ENCODE measurements at regions of chr1 and their contacts with region 1.

Region 1: GRCh38 chr1:203038891-203039608 is 12.8 kb downstream of the PPFIA4 start:
- DNase-seq: peak; percentile 89
- H3K27ac ChIP-seq: peak overlapping the region; percentile 69
- CTCF ChIP-seq: peak; percentile 91

Region 2: GRCh38 chr1:202643397-202644218 is 395.4 kb before region 1 on chr1:
- CTCF ChIA-PET with region 1: no interaction called
- POLR2A ChIA-PET with region 1: no interaction called
- DNase-seq: no peak
- H3K27ac ChIP-seq: no peak overlapping the region
- CTCF ChIP-seq: no peak

Region 3: GRCh38 chr1:202852163-202852904 is 186.7 kb before region 1 on chr1:
- CTCF ChIA-PET with region 1: no interaction called
- POLR2A ChIA-PET with region 1: no interaction called
- DNase-seq: peak; percentile 70
- H3K27ac ChIP-seq: no peak overlapping the region
- CTCF ChIP-seq: no peak; the same call in 1 of the 2 replicates

Region 4: GRCh38 chr1:202871366-202871765 is 167.7 kb before region 1 on chr1:
- CTCF ChIA-PET with region 1: no interaction called
- POLR2A ChIA-PET with region 1: no interaction called
- DNase-seq: no peak
- H3K27ac ChIP-seq: no peak overlapping the region
- CTCF ChIP-seq: no peak

Region 5: DNA sequence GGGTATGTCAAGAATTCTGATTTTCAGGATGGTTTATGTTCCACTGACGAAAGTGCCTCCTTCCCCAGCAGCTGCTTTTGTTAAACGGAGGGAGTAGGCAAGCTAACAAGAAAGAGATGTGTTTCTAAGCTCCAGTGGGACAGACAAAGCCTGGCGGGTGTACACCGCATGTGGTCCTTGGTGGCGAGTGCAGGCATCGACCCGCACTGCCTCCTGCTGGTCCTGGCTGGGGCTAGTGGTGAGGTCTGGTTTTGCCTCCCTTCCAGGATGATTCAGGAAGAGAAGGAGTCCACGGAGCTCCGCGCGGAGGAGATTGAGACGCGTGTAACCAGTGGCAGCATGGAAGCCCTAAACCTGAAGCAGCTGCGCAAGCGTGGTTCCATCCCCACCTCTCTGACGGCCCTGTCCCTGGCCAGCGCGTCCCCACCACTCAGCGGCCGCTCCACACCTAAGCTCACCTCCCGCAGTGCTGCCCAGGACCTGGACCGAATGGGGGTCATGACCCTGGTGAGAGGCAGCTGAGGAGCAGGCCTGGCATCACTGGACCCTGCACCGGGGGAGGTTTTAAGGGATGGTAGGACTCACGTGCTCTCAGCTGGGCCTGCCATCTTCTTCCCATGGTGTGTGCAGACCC is 16.2 kb after region 1 on chr1:
- CTCF ChIA-PET with region 1: interaction called, 24 read pairs
- POLR2A ChIA-PET with region 1: no interaction called
- DNase-seq: no peak
- H3K27ac ChIP-seq: no peak overlapping the region
- CTCF ChIP-seq: no peak

Region 6: DNA sequence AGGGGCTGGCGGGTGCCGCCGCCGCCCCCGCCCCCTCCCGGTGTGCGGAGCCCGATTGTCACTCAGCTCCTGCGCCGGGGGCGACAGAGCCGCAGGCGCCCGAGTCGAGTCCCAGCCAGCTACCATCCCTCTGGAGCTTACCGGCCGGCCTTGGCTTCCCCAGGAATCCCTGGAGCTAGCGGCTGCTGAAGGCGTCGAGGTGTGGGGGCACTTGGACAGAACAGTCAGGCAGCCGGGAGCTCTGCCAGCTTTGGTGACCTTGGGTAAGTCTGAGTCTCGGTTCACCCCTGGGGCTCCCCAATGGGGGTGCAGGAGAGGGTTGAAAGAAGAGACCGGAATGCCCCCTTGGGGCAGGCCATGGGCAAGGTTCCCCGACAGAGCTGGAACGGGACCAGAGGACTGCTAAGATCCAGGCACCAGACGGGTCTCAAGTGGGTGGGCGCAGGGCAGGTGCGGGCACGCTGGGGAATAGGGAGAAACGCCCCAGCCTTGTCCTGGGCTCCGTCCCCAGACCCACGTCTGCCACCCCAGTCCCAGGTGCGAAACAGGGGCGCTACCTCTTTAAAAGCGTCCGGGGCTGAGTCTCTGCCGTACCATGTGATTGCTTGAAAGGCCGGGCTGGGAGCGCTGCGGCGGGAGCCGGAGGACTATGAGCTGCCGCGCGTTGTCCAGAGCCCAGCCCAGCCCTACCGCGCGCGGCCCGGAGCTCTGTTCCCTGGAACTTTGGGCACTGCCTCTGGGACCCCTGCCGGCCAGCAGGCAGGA is 88.8 kb after region 1 on chr1 and contains the start of gene ADORA1:
- CTCF ChIA-PET with region 1: interaction called, 29 read pairs
- POLR2A ChIA-PET with region 1: no interaction called
- DNase-seq: peak; percentile 71
- H3K27ac ChIP-seq: peak within 1 kb of the TSS; percentile 18; the same call in 1 of the 2 replicates
- CTCF ChIP-seq: no peak

Region 7: GRCh38 chr1:203148125-203148524 is 109.1 kb after region 1 on chr1:
- CTCF ChIA-PET with region 1: interaction called, 11 read pairs
- POLR2A ChIA-PET with region 1: no interaction called
- DNase-seq: peak; percentile 60
- H3K27ac ChIP-seq: no peak overlapping the region
- CTCF ChIP-seq: peak; percentile 36

Region 8: GRCh38 chr1:203172128-203173010 is 133.3 kb after region 1 on chr1:
- CTCF ChIA-PET with region 1: interaction called, 84 read pairs
- POLR2A ChIA-PET with region 1: no interaction called
- DNase-seq: peak; percentile 82
- H3K27ac ChIP-seq: no peak overlapping the region
- CTCF ChIP-seq: peak; percentile 67

Region 9: GRCh38 chr1:203199816-203200571 is 160.9 kb after region 1 on chr1:
- CTCF ChIA-PET with region 1: interaction called, 10 read pairs
- POLR2A ChIA-PET with region 1: no interaction called
- DNase-seq: peak; percentile 49
- H3K27ac ChIP-seq: peak overlapping the region; percentile 92
- CTCF ChIP-seq: no peak

Region 10: GRCh38 chr1:204927673-204928641 is 1888.9 kb after region 1 on chr1:
- CTCF ChIA-PET with region 1: no interaction called
- POLR2A ChIA-PET with region 1: no interaction called
- DNase-seq: no peak
- H3K27ac ChIP-seq: no peak overlapping the region
- CTCF ChIP-seq: no peak

Measured in RWPE1 (cell line).